ENCODE measurements at regions of chr1 and their contacts with region 1.

Region 1: GRCh38 chr1:192573499-192573898 is 2.1 kb upstream of the RGS1 start:
- DNase-seq: no peak
- H3K4me3 ChIP-seq: no peak overlapping the region
- H3K27ac ChIP-seq: no peak overlapping the region
- H3K4me1 ChIP-seq: peaks cover 4% of the 10 kb centered on the region
- CTCF ChIP-seq: no peak

Region 2: GRCh38 chr1:192445848-192446489 is 127.5 kb before region 1 on chr1:
- CTCF ChIA-PET with region 1: no interaction called
- POLR2A ChIA-PET with region 1: no interaction called
- intact Hi-C with region 1: no loop called
- DNase-seq: peak; percentile 53
- H3K4me3 ChIP-seq: no peak overlapping the region
- H3K27ac ChIP-seq: no peak overlapping the region
- H3K4me1 ChIP-seq: no peaks in the 10 kb centered on the region
- CTCF ChIP-seq: peak; percentile 98

Region 3: DNA sequence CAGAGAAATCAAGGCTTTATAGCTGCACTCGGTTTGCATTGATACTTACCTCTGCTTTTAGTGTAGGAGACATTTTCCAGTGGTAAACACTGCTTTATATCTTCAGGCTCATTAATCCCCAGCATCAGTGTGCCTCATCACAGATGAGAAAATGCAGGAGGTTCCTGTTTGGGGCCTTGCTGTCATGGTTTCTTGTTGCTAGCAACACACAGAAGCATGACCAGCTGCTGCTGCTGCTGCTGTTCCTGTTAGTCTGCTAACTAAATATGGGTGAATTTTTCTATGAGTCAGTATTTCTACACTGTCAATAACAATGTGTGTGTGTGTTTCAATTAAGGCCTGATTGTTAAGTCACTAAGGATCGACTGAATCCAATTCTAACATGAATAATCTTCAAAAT is 83.8 kb before region 1 on chr1:
- CTCF ChIA-PET with region 1: no interaction called
- POLR2A ChIA-PET with region 1: no interaction called
- intact Hi-C with region 1: loop called (anchors 5 kb)
- DNase-seq: peak; percentile 23
- H3K4me3 ChIP-seq: no peak overlapping the region
- H3K27ac ChIP-seq: no peak overlapping the region
- H3K4me1 ChIP-seq: no peaks in the 10 kb centered on the region
- CTCF ChIP-seq: no peak

Region 4: GRCh38 chr1:192654591-192655251 is 81.2 kb after region 1 on chr1:
- CTCF ChIA-PET with region 1: no interaction called
- POLR2A ChIA-PET with region 1: no interaction called
- intact Hi-C with region 1: no loop called
- DNase-seq: no peak
- H3K4me3 ChIP-seq: no peak overlapping the region
- H3K27ac ChIP-seq: no peak overlapping the region
- H3K4me1 ChIP-seq: peaks cover 14% of the 10 kb centered on the region
- CTCF ChIP-seq: no peak

Measured in OCI-LY7 (cell line).